ENCODE measurements at regions of chrX and their contacts with region 1.

Region 1: DNA sequence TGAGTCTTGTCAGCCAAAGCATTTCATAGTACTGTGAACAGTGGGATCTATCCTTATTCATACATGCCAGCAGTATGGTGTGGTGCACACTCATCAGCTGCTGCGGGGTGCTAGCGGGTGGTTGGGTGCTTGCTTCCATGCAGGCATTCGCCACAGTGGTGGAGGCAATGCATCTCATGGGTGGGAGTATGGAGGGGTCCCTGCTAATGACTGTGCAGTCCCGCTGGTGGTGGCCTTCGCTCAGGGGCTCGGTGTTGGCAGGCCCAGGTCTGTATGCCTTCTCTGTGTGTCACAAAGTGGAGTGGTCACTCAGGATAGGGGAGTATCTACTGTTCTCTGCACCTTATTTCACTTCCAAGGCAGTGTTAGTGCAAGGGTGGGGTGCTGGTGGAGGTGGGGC is 122.6 kb downstream of the POU3F4 start:
- DNase-seq: no peak
- H3K4me3 ChIP-seq: no peak overlapping the region
- H3K27ac ChIP-seq: no peak overlapping the region
- H3K4me1 ChIP-seq: no peaks in the 10 kb centered on the region
- H3K27me3 ChIP-seq: no peaks in the 10 kb centered on the region
- CTCF ChIP-seq: no peak

Region 2: DNA sequence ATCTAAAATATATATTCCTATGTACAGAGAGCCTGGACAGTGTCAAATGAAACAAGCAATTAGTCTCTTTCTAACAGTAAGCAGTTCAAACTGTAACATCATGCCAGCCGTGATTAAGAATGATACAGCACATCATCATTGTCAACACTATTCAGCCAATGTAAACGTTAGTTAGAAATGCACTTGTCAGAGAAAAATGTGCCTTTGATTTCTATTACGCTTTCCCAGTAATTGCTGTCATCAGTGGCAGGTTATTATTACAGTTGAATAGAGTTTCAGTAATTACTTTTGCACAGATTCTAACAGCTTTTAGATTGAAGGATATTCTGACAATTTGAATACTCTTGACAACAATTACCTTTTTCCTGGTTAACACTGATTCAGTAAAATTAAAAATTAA is 1421.7 kb before region 1 on chrX:
- intact Hi-C with region 1: no loop called
- DNase-seq: no peak
- H3K4me3 ChIP-seq: no peak overlapping the region
- H3K27ac ChIP-seq: no peak overlapping the region
- H3K4me1 ChIP-seq: no peaks in the 10 kb centered on the region
- H3K27me3 ChIP-seq: no peaks in the 10 kb centered on the region
- CTCF ChIP-seq: no peak

Region 3: GRCh38 chrX:83469551-83469950 is 161.1 kb before region 1 on chrX:
- intact Hi-C with region 1: loop called (anchors 5 kb)
- DNase-seq: peak; percentile 20
- H3K4me3 ChIP-seq: no peak overlapping the region
- H3K27ac ChIP-seq: no peak overlapping the region
- H3K4me1 ChIP-seq: no peaks in the 10 kb centered on the region
- H3K27me3 ChIP-seq: no peaks in the 10 kb centered on the region
- CTCF ChIP-seq: peak; percentile 41

Region 4: DNA sequence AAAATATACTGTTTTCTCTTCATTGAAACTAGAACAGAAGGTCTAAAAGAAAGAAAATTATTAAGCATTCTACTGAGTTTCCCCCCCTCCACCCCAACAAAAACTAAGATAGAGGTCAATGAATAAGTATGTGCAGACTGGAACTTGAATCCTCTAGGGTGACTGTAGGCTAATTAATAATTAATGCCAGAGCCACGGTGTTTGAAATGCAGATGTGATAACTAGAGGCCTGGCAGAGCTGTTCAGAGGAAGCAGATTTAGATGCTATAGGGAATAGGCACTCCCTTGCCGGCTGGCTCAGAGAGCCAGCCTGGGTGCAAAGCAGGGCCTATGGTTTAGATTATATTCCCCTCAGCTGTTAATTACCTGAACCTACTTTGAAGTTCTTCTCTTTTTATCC is 134.8 kb before region 1 on chrX:
- intact Hi-C with region 1: no loop called
- DNase-seq: no peak
- H3K4me3 ChIP-seq: no peak overlapping the region
- H3K27ac ChIP-seq: no peak overlapping the region
- H3K4me1 ChIP-seq: no peaks in the 10 kb centered on the region
- H3K27me3 ChIP-seq: no peaks in the 10 kb centered on the region
- CTCF ChIP-seq: no peak